ENCODE measurements at regions of chr1 and their contacts with region 1.

Region 1: DNA sequence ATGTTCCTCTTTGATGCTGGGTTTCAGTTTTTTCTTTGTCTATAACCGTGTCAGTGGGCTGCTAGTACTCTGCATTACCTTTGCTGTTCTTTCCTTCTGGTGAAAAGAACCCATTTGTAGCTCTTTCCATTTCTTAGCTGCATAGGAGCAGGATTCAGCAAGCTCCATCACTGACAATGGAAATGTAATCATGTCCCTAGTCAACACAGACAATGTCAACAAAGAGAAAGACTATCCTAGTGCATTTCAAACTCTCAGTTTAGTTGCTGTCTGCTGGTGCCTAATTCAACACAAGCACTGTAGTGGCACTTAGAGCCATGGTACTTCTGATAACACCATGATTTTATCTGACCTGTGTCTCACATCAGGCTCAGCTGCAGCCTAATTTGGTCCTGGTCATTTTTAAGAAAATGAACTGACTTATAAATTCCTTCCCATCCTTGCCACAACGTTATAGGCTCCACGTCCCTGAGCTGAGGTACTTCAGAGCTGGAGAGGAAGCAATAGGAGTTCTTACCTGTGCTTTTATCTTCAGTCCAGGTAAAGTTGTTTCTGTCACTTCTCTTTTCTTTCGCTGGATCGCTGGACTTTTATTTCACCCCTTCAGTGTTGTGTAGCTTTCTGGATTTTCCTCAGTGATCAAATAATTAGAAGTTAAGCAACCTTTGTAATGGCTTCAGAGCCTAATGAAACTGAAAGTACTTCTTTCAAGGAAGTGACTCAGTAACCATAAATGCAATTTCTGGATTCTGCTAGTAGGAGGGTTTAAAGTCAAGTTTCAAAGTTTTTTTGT is at the start of gene GBP3:
- DNase-seq: no peak
- H3K4me3 ChIP-seq: peak within 1 kb of the TSS; percentile 12; the same call in 1 of the 2 replicates
- H3K4me3 Mint-ChIP-seq: peak within 1 kb of the TSS; percentile 55
- H3K27ac Mint-ChIP-seq: peak within 1 kb of the TSS; percentile 21
- H3K4me1 ChIP-seq: peaks cover 12% of the 10 kb centered on the region; the same call in 1 of the 2 replicates
- H3K4me1 Mint-ChIP-seq: peaks cover 21% of the 10 kb centered on the region
- H3K27me3 ChIP-seq: no peaks in the 10 kb centered on the region
- H3K27me3 Mint-ChIP-seq: no peaks in the 10 kb centered on the region
- CTCF ChIP-seq: no peak
- total RNA-seq, gene GBP3: 0.48 and 0.91 TPM in 2 replicates

Region 2: GRCh38 chr1:89044970-89045721 is 22.8 kb after region 1 on chr1:
- CTCF ChIA-PET with region 1: no interaction called
- POLR2A ChIA-PET with region 1: no interaction called
- intact Hi-C with region 1: loop called (anchors 2 kb)
- DNase-seq: peak; percentile 61 to 63
- H3K4me3 ChIP-seq: no peak overlapping the region
- H3K4me3 Mint-ChIP-seq: no peak overlapping the region
- H3K27ac Mint-ChIP-seq: no peak overlapping the region
- H3K4me1 ChIP-seq: peaks cover 9% of the 10 kb centered on the region; the same call in 1 of the 2 replicates
- H3K4me1 Mint-ChIP-seq: no peaks in the 10 kb centered on the region
- H3K27me3 ChIP-seq: no peaks in the 10 kb centered on the region
- H3K27me3 Mint-ChIP-seq: no peaks in the 10 kb centered on the region
- CTCF ChIP-seq: no peak